ENCODE measurements at regions of chr3 and their contacts with region 1.

Region 1: GRCh38 chr3:131026321-131027178 is at the starts of genes ASTE1 and NEK11:
- DNase-seq: peak; percentile 70
- ATAC-seq: peak; percentile 99
- H3K4me3 ChIP-seq: peak within 1 kb of the TSS; percentile 67 to 86 (median 81)
- H3K27ac ChIP-seq: peak within 1 kb of the TSS; percentile 82
- H3K4me1 ChIP-seq: peaks cover 20% of the 10 kb centered on the region
- H3K27me3 ChIP-seq: no peaks in the 10 kb centered on the region
- CTCF ChIP-seq: peak; percentile 15; the same call in 1 of the 2 replicates
- EP300 ChIP-seq: no peak
- POLR2A ChIP-seq: peak; percentile 78 to 86
- RAD21 ChIP-seq: no peak
- total RNA-seq, gene ASTE1: 7.9 and 10.5 TPM in 2 replicates
- total RNA-seq, gene NEK11: 2.2 and 2.4 TPM in 2 replicates

Region 2: GRCh38 chr3:130379274-130379673 is 647.3 kb before region 1 on chr3:
- CTCF ChIA-PET with region 1: no interaction called
- POLR2A ChIA-PET with region 1: no interaction called
- in situ Hi-C with region 1: no loop called
- intact Hi-C with region 1: no loop called
- DNase-seq: no peak
- ATAC-seq: no peak
- H3K4me3 ChIP-seq: no peak overlapping the region
- H3K27ac ChIP-seq: no peak overlapping the region
- H3K4me1 ChIP-seq: no peaks in the 10 kb centered on the region
- H3K27me3 ChIP-seq: no peaks in the 10 kb centered on the region
- CTCF ChIP-seq: no peak
- EP300 ChIP-seq: no peak
- POLR2A ChIP-seq: no peak
- RAD21 ChIP-seq: no peak

Region 3: GRCh38 chr3:131047582-131047981 is 21.0 kb after region 1 on chr3:
- CTCF ChIA-PET with region 1: no interaction called
- POLR2A ChIA-PET with region 1: no interaction called
- in situ Hi-C with region 1: no loop called
- intact Hi-C with region 1: no loop called
- DNase-seq: peak; percentile 19
- ATAC-seq: peak; percentile 54
- H3K4me3 ChIP-seq: no peak overlapping the region
- H3K27ac ChIP-seq: no peak overlapping the region
- H3K4me1 ChIP-seq: peaks cover 14% of the 10 kb centered on the region; the same call in 1 of the 2 replicates
- H3K27me3 ChIP-seq: no peaks in the 10 kb centered on the region
- CTCF ChIP-seq: peak; percentile 26; the same call in 1 of the 2 replicates
- EP300 ChIP-seq: no peak
- POLR2A ChIP-seq: no peak
- RAD21 ChIP-seq: no peak

Region 4: DNA sequence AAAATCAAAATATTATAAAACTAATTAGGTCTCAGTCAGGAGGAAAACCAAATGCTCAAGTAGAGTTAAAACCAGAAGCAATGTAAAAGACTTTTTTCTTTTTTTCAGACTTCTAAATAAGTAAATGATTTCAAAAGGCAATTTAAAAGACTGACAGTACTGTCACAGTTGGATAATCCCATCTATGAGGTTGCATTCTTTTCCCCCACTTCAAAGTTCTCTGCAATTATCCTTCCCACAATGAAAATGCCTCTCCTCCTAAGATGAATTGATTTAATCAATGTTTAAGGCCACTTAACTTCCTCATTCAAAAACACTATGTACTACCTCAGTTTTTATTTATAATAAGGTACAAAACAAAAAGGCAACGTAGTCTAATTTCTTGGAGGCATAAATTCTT is 468.2 kb after region 1 on chr3:
- CTCF ChIA-PET with region 1: no interaction called
- POLR2A ChIA-PET with region 1: no interaction called
- in situ Hi-C with region 1: loop called (anchors 25 kb)
- intact Hi-C with region 1: no loop called
- DNase-seq: no peak
- ATAC-seq: no peak
- H3K4me3 ChIP-seq: no peak overlapping the region
- H3K27ac ChIP-seq: no peak overlapping the region
- H3K4me1 ChIP-seq: no peaks in the 10 kb centered on the region
- H3K27me3 ChIP-seq: no peaks in the 10 kb centered on the region
- CTCF ChIP-seq: no peak
- EP300 ChIP-seq: no peak
- POLR2A ChIP-seq: no peak
- RAD21 ChIP-seq: no peak

Region 5: DNA sequence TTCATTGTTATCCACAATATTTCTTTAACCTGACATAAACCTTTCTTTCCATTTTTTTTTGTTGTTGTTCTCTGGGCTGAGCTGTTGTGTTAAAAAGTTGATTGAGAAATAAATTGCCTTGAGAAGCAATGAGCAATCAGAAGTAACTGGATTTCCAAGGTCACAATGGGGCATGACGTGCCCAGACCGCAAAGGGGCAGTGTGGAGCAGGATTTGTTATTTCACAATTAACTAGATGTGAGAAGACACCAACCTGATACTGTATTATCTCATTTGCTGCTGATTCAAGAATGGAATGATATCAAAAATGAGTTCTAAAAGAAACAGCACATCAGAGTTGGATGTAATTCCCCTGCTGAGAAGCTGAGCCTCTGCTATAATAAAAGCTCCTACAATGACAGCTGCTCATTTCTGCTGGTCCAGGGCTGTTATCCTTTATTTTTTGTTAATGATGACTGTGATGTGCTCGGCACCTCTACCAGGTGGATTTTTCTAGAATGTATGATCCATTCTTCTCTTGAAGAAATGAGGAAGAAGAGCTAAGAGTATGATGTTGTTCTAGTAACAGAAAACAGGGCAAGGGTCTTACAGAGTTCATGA is 980.2 kb after region 1 on chr3:
- CTCF ChIA-PET with region 1: no interaction called
- POLR2A ChIA-PET with region 1: no interaction called
- in situ Hi-C with region 1: loop called (anchors 25 kb)
- intact Hi-C with region 1: no loop called
- DNase-seq: peak; percentile 25
- ATAC-seq: peak; percentile 53; the same call in 1 of the 3 replicates
- H3K4me3 ChIP-seq: no peak overlapping the region
- H3K27ac ChIP-seq: no peak overlapping the region
- H3K4me1 ChIP-seq: no peaks in the 10 kb centered on the region
- H3K27me3 ChIP-seq: no peaks in the 10 kb centered on the region
- CTCF ChIP-seq: peak; percentile 57
- EP300 ChIP-seq: no peak
- POLR2A ChIP-seq: no peak
- RAD21 ChIP-seq: no peak

Measured in HepG2 (cell line).